ENCODE measurements at regions of chr1 and their contacts with region 1.

Region 1: DNA sequence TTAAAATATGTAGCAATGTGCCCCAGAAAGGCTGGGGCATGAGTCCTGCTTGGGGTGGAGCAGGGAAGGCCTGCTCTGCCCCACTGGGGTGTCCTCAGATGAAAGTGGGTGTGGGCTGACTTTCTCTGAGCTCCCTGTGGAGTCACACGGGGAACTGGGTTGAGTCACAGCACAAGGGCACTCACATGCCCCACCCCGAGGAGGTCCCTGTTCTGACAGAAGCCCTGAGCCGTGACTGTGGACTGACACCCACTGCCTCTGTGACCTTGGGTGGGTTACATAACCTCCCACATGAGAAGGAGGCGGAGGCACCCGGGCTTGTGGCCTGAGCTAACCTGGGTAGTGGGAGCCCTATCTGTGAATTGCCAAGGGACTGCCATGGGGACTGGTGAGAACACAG is 52.5 kb upstream of the TINAGL1 start:
- DNase-seq: no peak
- ATAC-seq: no peak
- H3K4me3 ChIP-seq: no peak overlapping the region
- H3K27ac ChIP-seq: no peak overlapping the region
- H3K4me1 ChIP-seq: no peaks in the 10 kb centered on the region
- H3K27me3 ChIP-seq: no peaks in the 10 kb centered on the region
- CTCF ChIP-seq: no peak

Region 2: GRCh38 chr1:31822766-31823165 is 299.0 kb after region 1 on chr1:
- CTCF ChIA-PET with region 1: interaction called, 10 read pairs
- POLR2A ChIA-PET with region 1: no interaction called
- in situ Hi-C with region 1: no loop called
- intact Hi-C with region 1: no loop called
- DNase-seq: no peak
- ATAC-seq: no peak; the same call in 1 of the 2 replicates
- H3K4me3 ChIP-seq: no peak overlapping the region
- H3K27ac ChIP-seq: no peak overlapping the region
- H3K4me1 ChIP-seq: no peaks in the 10 kb centered on the region
- H3K27me3 ChIP-seq: no peaks in the 10 kb centered on the region
- CTCF ChIP-seq: no peak